ENCODE measurements at regions of chr11 and their contacts with region 1.

Region 1: DNA sequence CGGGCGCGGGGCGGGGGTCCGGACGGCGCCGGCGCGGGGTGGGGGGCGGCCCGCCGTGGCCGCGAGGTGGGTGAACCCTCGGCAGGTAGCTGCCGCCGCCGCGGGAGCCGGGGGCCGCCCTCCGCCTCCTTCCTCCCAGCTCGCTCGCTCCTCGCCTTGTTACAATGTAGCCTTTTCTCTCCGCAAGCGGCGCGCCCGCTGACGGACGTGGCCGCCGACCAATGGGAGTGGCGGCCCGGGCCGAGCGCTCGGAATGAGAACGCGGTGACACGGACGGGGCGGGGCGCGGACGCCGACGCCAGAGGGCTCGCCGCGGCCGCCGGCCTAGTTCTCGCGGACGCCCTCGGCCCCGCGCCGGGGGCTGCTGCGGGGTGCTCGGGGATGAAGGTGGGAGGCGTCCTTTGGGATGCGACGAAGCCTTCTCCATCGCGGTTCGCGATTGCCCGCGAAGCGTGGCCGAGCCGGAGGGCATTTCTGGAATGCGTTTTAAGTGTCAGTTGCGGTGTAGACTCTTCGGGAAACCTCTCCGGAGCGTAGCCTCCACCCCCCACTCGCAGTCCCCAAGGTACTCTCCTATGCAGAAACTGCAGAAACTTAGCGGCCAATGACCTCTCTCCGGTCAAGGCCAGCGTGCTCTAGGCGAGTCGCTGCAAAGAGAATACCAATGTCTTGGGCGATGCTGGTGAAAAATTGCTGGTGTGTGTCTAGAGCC is 734 bp downstream of the PRDM11 start:
- DNase-seq: peak; percentile 85 to 97 (median 94)
- H3K4me3 ChIP-seq: peak overlapping the region; percentile 61 to 97 (median 83)
- H3K27ac ChIP-seq: peak overlapping the region in 57 of 59 donors; percentile 2 to 98 (median 92)
- H3K27me3 ChIP-seq: no peaks in the 10 kb centered on the region
- CTCF ChIP-seq: peak in 41 of 56 donors; percentile 4 to 57 (median 32)

Region 2: DNA sequence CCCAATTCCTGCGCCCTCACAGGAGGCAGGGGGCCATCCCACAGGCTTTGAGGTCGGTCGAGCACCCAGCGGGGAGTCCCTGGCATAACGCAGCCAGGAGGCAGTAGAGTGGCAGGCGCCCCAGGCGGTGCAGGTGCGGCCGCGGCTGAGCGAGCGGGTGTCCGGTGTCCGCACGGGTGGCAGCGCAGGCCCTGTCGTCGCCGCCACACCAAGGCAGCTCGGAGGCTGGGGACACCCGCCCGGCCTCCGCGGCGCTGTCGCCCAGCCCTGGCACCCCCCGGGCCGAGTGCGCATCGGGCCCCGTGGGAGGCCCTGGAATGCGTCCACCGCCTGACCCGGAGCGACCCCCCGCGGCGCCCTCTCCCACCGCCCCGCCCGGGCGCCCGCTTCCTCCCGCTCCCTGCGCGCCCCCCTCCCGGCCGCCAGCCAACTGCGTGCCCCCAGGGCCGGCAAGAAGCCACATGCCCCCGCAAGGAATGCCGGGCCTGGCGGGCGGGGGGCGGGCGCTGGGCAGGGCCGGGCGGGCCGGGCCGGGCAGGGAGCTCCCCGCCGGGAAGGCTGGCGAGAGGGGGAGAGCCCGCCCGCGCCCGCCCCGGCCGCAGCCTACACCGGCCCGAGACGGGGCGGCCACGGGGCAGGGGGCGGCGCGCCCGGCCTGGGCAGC is 33.1 kb after region 1 on chr11:
- intact Hi-C with region 1: loop called (anchors 5 kb)
- DNase-seq: peak in 2 of 10 donors; percentile 53 to 56
- H3K4me3 ChIP-seq: peak overlapping the region; percentile 43 to 78 (median 63)
- H3K27ac ChIP-seq: peak overlapping the region in 55 of 59 donors; percentile 1 to 92 (median 81)
- H3K27me3 ChIP-seq: no peaks in the 10 kb centered on the region
- CTCF ChIP-seq: peak in 47 of 56 donors; percentile 11 to 62 (median 39)

Region 3: DNA sequence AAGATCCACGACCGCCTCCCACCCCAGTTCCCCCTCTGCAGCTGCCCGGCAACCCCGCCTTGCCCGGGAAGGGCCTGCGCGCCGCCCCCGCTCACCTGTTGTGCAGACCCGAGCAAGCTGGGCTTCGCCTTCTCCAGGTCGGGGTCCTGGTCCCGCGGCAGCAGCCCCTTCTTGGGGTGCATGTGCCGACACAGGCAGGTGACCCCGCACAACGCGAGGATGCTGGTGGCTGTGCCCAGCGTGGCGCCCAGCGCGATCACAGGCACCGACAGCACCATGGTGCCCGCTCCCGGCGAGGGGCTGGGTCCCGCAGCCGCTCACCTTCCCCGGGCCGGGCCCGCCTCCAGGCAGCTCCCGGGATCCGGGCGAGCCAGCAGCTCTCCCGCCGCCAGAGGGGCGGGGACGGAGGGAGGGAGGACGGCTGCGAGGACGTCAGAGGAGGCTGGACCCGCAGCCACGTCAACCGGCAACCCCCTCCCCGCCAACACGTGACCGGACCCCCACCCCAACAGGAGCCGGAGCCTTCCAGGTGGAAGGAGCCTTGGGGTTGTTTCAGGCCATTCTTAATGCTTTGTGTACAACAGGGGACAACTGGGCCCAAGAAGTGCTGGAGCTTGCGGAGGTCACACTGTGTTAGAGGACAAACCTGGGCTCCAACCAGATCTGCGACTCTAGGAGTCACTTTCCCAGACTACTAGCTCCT is 138.9 kb after region 1 on chr11 and contains the start of gene SYT13:
- intact Hi-C with region 1: loop called in 1 of 2 experiments (anchors 10 kb)
- DNase-seq: peak in 8 of 10 donors; percentile 61 to 87 (median 72)
- H3K4me3 ChIP-seq: peak within 1 kb of the TSS in 57 of 59 donors; percentile 19 to 77 (median 62)
- H3K27ac ChIP-seq: peak within 1 kb of the TSS in 49 of 59 donors; percentile 32 to 86 (median 66)
- H3K27me3 ChIP-seq: peaks cover 0 to 64% (median 12%) of the 10 kb centered on the region in 45 donors
- CTCF ChIP-seq: no peak
- total RNA-seq, gene SYT13: 30.8 to 204 (median 115) TPM

Region 4: GRCh38 chr11:45804761-45805304 is 657.7 kb after region 1 on chr11 and contains the start of gene SLC35C1:
- intact Hi-C with region 1: loop called in 1 of 2 experiments (anchors 10 kb)
- DNase-seq: peak; percentile 95 to 99 (median 98)
- H3K4me3 ChIP-seq: peak within 1 kb of the TSS; percentile 58 to 99 (median 89)
- H3K27ac ChIP-seq: peak within 1 kb of the TSS in 57 of 59 donors; percentile 4 to 91 (median 78)
- H3K27me3 ChIP-seq: no peaks in the 10 kb centered on the region
- CTCF ChIP-seq: peak in 51 of 56 donors; percentile 24 to 71 (median 49)
- total RNA-seq, gene SLC35C1: 5.6 to 14.4 (median 8.5) TPM